T-cell (primary cell): ENCODE measurements at regions of chr19 and their contacts with region 1.

Region 1: DNA sequence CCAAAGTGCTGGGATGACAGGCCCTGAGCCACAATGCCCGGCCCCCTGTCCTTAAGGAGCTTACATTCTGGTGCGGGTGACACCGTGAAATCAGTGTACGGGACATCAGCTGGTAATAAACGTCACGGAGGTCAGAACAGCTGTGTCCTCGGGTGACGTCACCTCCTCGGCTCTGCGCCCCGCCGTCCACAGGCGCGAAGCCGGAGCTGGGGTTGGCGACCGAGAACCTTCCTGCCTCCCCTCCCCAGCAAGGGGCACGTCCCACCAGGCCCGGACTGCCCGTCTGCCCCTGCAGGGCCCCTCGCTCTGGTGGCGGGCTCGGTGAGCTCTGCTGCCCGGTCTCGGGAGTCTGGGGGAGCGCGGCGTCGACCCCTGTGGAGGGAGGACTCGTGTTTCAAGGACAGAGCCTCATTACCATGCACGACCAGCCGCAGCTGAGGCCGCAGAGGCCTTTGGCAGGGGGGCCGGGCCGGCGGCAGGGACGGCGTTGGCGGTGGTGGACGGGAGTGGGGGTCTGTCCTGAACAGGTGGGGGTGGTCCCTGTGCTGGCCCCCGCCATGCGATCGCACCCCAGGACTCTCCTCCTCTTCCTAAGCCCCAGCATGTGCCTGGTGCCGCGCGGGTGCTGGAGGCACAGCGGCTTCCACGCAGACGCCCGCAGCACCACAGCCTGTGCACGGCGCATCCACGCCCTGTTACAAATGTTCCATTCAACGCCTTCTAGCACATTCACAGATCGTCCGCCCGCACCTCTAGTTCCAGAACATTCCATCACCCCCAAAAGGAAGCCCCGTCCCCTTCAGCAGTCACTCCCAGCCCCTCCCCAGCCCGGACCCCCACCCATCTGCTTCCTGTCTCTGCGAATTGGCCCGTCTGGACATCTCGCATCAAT is 5.4 kb downstream of the LINGO3 start:
- DNase-seq: peak in 5 of 35 experiments; percentile 17 to 37 (median 32)
- ATAC-seq: peak; percentile 57 to 73 (median 66)
- H3K4me3 ChIP-seq: peak overlapping the region; percentile 15 to 23
- H3K4me3 Mint-ChIP-seq: peak overlapping the region; percentile 36 to 75 (median 67)
- H3K27ac ChIP-seq: no peak overlapping the region
- H3K27ac Mint-ChIP-seq: peak overlapping the region in 1 of 2 donors; percentile 43
- H3K4me1 ChIP-seq: peaks cover 0 to 22% of the 10 kb centered on the region in 2 experiments
- H3K4me1 Mint-ChIP-seq: peaks cover 7 to 22% (median 11%) of the 10 kb centered on the region in 3 donors
- H3K27me3 ChIP-seq: peaks cover 0 to 65% of the 10 kb centered on the region in 2 experiments
- H3K27me3 Mint-ChIP-seq: peaks cover 20 to 36% of the 10 kb centered on the region in 2 donors

Region 2: GRCh38 chr19:2962045-2962561 is 659.5 kb after region 1 on chr19:
- CTCF ChIA-PET with region 1: no interaction called
- POLR2A ChIA-PET with region 1: interaction called in 1 of 2 experiments, 15 read pairs
- DNase-seq: peak in 28 of 35 experiments; percentile 12 to 93 (median 34)
- ATAC-seq: peak in 3 of 4 experiments; percentile 76 to 93 (median 78)
- H3K4me3 ChIP-seq: no peak overlapping the region
- H3K4me3 Mint-ChIP-seq: no peak overlapping the region
- H3K27ac ChIP-seq: no peak overlapping the region
- H3K27ac Mint-ChIP-seq: peak overlapping the region in 1 of 2 donors; percentile 28
- H3K4me1 ChIP-seq: peaks cover 0 to 9% of the 10 kb centered on the region in 2 experiments
- H3K4me1 Mint-ChIP-seq: peaks cover 4 to 7% (median 5%) of the 10 kb centered on the region in 3 donors
- H3K27me3 ChIP-seq: peaks cover 0 to 5% of the 10 kb centered on the region in 2 experiments
- H3K27me3 Mint-ChIP-seq: no peaks in the 10 kb centered on the region